Cardiac septum (tissue), 1 donor: ENCODE measurements at regions of chr19 and their contacts with region 1.

Region 1: GRCh38 chr19:45467456-45468158 is at the start of gene FOSB:
- DNase-seq: peak; percentile 96
- total RNA-seq, gene FOSB: 0.94 TPM

Region 2: GRCh38 chr19:45455707-45456499 is 11.7 kb before region 1 on chr19:
- intact Hi-C with region 1: loop called (anchors 1 kb)
- DNase-seq: peak; percentile 95